ENCODE measurements at regions of chr4 and their contacts with region 1.

Region 1: GRCh38 chr4:75514131-75514948 is at the starts of genes RCHY1 and THAP6:
- DNase-seq: peak; percentile 98
- H3K4me3 ChIP-seq: peak within 1 kb of the TSS; percentile 79 to 86
- H3K27ac ChIP-seq: peak within 1 kb of the TSS; percentile 94 to 96
- H3K4me1 ChIP-seq: peaks cover 10% of the 10 kb centered on the region
- H3K27me3 ChIP-seq: no peaks in the 10 kb centered on the region
- CTCF ChIP-seq: no peak
- POLR2A ChIP-seq: no peak
- total RNA-seq, gene RCHY1: 35.5 to 44.5 TPM
- total RNA-seq, gene THAP6: 30.2 to 44.0 TPM

Region 2: GRCh38 chr4:74932816-74933561 is 581.4 kb before region 1 on chr4 and contains the start of gene PARM1:
- intact Hi-C with region 1: loop called (anchors 5 kb)
- DNase-seq: peak; percentile 94
- H3K4me3 ChIP-seq: peak within 1 kb of the TSS; percentile 79 to 82
- H3K27ac ChIP-seq: peak within 1 kb of the TSS; percentile 78 to 94
- H3K4me1 ChIP-seq: peaks cover 13% of the 10 kb centered on the region
- H3K27me3 ChIP-seq: no peaks in the 10 kb centered on the region
- CTCF ChIP-seq: peak; percentile 77 to 85 (median 84)
- POLR2A ChIP-seq: peak; percentile 68
- total RNA-seq, gene PARM1: 40.1 to 40.5 TPM

Region 3: DNA sequence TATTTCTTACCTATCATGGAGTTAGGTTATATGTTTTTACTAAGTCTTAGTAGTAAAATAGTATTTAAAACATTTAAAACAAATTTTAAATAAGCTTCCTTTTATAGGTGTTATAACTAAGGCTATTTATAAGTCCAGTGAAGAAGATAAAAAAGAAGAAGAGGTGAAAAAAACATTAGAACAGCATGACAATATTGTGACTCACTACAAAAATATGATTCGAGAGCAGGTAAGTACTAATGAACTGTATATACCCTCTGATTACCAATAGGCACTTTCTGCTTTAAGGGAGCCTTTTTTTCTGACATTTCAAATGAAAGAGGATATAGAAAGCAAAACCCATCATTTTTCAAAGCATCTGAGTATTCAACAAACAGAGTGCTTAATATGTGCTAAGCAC is 286.6 kb after region 1 on chr4:
- intact Hi-C with region 1: no loop called
- DNase-seq: no peak
- H3K4me3 ChIP-seq: no peak overlapping the region
- H3K27ac ChIP-seq: no peak overlapping the region
- H3K4me1 ChIP-seq: no peaks in the 10 kb centered on the region
- H3K27me3 ChIP-seq: no peaks in the 10 kb centered on the region
- CTCF ChIP-seq: no peak
- POLR2A ChIP-seq: no peak